Thyroid gland (tissue), 4 donors: ENCODE measurements at regions of chr15 and their contacts with region 1.

Region 1: DNA sequence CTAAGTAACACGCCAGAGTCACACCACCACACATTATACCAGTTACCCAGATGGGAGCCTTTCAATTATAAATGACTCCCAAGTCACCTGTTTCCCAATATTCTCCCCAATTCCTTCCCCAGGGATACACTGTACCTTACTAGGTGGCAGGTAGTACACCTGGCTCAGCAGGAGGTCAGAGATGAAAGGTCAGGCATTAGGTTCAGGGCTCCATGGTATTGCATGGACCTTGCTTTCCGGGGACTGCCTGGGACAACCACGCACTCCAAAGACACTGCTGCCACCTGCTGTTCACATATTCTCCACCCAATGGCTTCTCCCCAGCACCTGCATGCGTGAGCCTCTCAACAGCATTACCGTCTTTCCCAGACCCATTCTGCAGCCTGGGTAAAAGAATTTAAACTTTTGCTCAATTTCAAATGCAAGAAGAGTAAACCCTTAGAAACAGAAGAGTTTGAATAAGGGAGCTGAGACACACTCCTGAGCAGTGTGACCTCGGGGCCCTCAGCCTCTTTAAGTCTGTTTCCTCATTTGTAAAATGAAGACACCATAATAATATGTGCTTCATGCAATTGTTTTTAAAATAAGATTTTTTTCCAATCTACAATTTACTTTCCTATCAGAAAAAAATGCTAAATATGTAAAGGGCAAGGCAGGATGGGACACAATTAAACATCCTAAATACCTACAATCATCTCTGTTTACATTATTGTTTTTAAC is 28.0 kb upstream of the LACTB start:
- DNase-seq: peak; percentile 86 to 87
- H3K4me3 ChIP-seq: no peak overlapping the region
- H3K27ac ChIP-seq: no peak overlapping the region
- H3K4me1 ChIP-seq: peaks cover 21 to 22% of the 10 kb centered on the region in 2 donors
- H3K27me3 ChIP-seq: no peaks in the 10 kb centered on the region
- CTCF ChIP-seq: peak; percentile 51 to 94 (median 86)
- POLR2A ChIP-seq: no peak

Region 2: GRCh38 chr15:62782039-62782791 is 311.4 kb before region 1 on chr15:
- intact Hi-C with region 1: loop called (anchors 5 kb)
- DNase-seq: peak; percentile 97
- H3K4me3 ChIP-seq: no peak overlapping the region
- H3K27ac ChIP-seq: peak overlapping the region; percentile 74 to 85 (median 81)
- H3K4me1 ChIP-seq: peaks cover 30 to 35% of the 10 kb centered on the region in 2 donors
- H3K27me3 ChIP-seq: no peaks in the 10 kb centered on the region
- CTCF ChIP-seq: peak; percentile 30 to 97 (median 74)
- POLR2A ChIP-seq: peak in 1 of 2 donors; percentile 29

Region 3: DNA sequence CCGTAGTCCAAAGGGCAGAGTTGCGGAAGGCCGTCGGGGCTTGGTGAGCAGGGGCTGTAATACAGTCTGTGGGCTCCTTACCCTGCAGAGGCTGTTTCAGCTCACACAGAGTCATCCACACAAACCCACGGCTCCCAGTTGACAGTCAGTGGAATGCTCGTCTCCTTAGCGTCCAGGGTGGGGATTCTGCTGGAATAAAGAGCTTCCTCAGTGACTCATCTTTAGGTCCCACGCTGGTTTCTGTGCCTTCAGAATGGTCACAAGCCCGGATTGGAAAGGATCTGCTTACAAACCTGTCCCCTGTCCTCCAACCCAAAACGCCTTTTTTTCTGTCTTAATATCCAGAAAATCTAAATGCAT is 252.4 kb before region 1 on chr15:
- intact Hi-C with region 1: loop called (anchors 5 kb)
- DNase-seq: no peak
- H3K4me3 ChIP-seq: no peak overlapping the region
- H3K27ac ChIP-seq: no peak overlapping the region
- H3K4me1 ChIP-seq: no peaks in the 10 kb centered on the region
- H3K27me3 ChIP-seq: no peaks in the 10 kb centered on the region
- CTCF ChIP-seq: no peak
- POLR2A ChIP-seq: no peak

Region 4: DNA sequence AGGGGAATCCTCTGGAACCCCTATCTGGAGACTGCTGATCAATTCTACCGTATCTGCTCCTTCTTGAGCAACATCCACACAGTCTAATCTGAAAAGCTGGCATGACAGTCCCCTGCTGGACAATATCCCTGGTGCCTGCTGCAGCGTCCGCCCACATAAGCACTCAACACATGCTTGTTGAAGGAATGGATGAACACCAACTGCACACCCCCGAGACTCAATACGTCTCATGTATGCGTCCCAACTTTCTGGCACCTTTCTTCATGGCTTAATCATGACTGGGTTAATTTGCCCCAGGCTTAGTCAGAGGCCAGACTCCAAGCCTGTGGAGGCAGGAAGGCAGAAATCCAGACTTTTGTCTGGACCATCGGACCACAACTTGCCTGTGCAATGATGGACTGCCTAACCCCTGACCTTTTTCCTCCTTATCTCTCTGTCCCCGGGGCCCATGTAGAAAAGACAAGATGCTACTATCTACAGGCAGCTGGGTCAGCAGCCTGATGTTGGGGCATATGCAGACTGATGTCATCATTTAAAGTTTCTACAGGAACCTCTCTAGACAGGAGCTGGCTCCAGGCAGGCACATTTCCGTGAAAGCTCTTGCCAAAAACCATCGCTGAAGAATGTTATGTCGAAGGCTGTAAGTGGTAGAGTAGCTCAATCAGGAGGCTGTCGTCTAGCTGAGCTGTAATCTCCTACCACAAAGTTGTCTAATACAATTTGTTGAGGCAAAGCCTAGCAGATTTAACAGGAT is 165.2 kb before region 1 on chr15:
- intact Hi-C with region 1: no loop called
- DNase-seq: peak in 1 of 2 donors; percentile 5
- H3K4me3 ChIP-seq: no peak overlapping the region
- H3K27ac ChIP-seq: no peak overlapping the region
- H3K4me1 ChIP-seq: no peaks in the 10 kb centered on the region
- H3K27me3 ChIP-seq: no peaks in the 10 kb centered on the region
- CTCF ChIP-seq: no peak
- POLR2A ChIP-seq: no peak

Region 5: GRCh38 chr15:63019539-63020109 is 74.0 kb before region 1 on chr15:
- intact Hi-C with region 1: no loop called
- DNase-seq: peak; percentile 7 to 34
- H3K4me3 ChIP-seq: no peak overlapping the region
- H3K27ac ChIP-seq: no peak overlapping the region
- H3K4me1 ChIP-seq: no peaks in the 10 kb centered on the region
- H3K27me3 ChIP-seq: no peaks in the 10 kb centered on the region
- CTCF ChIP-seq: no peak
- POLR2A ChIP-seq: no peak

Region 6: DNA sequence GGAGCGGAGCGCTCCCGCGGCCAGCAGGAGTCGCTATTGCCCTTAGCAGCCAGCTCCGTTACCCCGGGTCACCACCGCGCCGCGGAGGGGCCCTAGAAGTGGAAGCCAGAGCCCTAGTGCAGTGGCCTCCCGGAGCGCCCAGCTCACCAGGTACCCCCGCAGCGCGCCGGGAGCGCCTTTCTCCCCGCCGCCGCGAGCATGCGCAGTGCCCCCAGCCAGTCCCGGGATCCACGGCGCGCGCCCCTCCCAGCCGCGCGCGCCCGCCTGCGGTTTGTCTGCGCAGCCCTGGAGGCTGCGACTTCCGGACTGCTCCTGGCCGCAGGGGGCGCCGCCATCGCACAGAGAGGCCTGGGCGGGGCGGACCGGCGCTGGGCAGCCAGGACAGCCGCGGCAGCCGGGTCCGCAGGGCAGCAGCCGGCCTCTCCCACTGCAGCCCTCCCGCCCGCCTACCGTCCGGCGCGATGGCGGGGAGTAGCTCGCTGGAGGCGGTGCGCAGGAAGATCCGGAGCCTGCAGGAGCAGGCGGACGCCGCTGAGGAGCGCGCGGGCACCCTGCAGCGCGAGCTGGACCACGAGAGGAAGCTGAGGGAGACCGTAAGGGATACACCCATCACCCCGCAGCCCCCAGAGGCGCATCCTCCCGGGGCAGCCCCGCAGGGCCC is 45.4 kb before region 1 on chr15:
- intact Hi-C with region 1: loop called (anchors 2 kb)
- DNase-seq: peak; percentile 97 to 98
- H3K4me3 ChIP-seq: peak overlapping the region; percentile 69 to 85 (median 80)
- H3K27ac ChIP-seq: peak overlapping the region; percentile 59 to 95 (median 92)
- H3K4me1 ChIP-seq: peaks cover 35 to 62% of the 10 kb centered on the region in 2 donors
- H3K27me3 ChIP-seq: no peaks in the 10 kb centered on the region
- CTCF ChIP-seq: peak; percentile 83 to 99 (median 88)
- POLR2A ChIP-seq: peak; percentile 70 to 94

Region 7: DNA sequence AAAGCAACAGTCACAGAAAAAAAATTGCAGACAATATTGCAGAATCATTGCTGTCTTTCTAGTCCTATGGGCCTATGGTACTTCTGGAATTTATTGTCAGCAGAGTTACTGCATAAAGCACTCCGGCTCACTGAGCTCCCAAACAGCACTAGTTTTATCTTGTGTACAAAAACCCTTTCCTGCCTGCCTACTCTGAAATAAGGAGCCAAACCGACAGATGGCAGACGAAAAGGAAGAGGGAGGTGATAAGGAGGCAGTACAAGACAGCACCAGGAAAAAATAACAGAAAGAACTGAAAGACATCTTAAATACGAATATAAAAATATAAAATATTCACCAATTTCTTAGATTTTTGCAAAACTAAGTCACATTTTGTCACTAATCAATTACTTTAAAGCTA is 724.5 kb after region 1 on chr15:
- intact Hi-C with region 1: no loop called
- DNase-seq: no peak
- H3K4me3 ChIP-seq: no peak overlapping the region
- H3K27ac ChIP-seq: no peak overlapping the region
- H3K4me1 ChIP-seq: peaks cover 48 to 56% of the 10 kb centered on the region in 2 donors
- H3K27me3 ChIP-seq: no peaks in the 10 kb centered on the region
- CTCF ChIP-seq: no peak
- POLR2A ChIP-seq: no peak